Right ventricle myocardium superior (tissue), 1 donor: ENCODE measurements at regions of chr2 and their contacts with region 1.

Region 1: DNA sequence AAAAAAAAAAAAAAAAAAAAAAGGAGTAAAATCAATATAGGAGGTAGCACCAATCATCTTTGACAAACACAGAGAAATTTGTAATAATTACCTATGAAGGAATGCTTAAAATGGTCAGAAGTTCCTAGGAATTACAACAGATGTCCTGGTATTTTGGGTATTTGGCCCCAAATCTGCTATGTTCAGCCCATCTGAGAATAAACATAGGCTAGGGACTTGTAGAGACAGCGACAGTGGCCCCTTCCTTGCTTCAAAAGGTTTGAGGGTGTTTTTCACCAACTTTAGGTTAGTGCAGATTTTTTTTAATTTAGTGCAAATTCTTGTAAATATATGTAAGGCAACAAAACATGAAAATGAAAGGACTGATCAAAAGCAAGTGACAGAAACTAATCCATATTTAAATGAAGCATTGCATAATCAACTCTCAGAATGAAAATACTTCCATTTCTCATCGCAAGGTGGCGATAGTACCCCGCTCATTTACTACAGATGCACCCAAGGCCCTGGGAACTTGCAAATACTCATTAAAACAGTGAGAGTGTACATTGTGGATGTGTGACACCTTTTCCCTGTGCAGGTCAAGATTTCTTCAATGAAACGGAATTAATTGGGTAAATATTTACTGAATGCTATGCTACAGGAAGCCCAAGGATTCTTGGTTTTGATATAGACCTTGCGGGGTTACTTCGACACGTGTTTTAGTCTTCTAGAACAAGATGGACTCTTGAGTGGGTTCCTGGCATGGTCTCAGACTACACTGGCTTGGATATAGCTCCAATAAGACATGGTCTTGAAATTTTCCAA is 44.6 kb downstream of the FAM124B start:
- DNase-seq: no peak
- ATAC-seq: peak; percentile 87

Region 2: GRCh38 chr2:224650815-224651439 is 293.6 kb after region 1 on chr2:
- intact Hi-C with region 1: loop called (anchors 5 kb)
- DNase-seq: no peak
- ATAC-seq: peak; percentile 71

Region 3: DNA sequence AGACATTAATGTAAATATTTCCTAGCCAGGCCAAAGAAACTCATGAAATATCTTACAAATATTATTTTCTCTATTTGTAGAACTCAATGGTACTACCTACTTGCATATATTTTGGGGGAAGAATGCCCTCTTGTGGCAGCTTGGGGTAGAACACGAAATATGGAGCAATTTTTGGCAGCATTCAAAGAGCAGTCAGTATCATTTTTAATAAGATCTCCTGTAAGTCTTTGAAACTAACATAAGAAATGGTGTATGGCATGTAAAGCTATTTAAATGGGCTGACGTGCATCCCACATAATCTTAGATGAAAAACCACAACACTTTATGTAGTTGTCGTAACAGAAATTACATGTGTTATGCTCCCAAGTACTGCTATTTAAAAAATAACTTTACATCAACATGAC is 421.2 kb after region 1 on chr2:
- intact Hi-C with region 1: loop called (anchors 5 kb)
- DNase-seq: no peak
- ATAC-seq: no peak